Pancreas (tissue), 10 donors: ENCODE measurements at regions of chr3 and their contacts with region 1.

Region 1: DNA sequence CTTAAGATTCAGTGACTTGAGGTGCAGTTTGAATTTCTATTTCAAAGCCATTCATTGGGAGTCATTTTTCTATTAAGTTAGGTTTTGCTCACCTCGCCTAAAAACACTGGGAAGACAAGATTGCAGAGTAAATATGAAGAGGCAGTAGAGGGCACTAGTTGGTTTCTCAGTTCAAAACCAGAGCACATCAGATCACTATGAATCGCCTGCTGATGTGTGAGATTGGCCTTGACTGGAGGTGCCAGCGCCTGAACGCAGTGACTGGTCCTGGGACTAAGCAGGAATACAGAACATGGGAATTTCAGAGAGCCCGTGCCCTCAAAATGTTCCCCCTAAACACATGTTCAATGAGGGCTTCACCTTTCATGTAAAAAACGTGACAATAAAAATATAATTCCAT is 229.0 kb downstream of the ITPR1 start:
- DNase-seq: peak in 4 of 6 donors; percentile 62 to 75 (median 72)
- ATAC-seq: peak; percentile 62 to 80 (median 78)
- H3K4me3 ChIP-seq: no peak overlapping the region
- H3K27ac ChIP-seq: peak overlapping the region in 3 of 4 donors; percentile 44 to 83 (median 69)
- H3K4me1 ChIP-seq: peaks cover 46 to 56% (median 48%) of the 10 kb centered on the region in 3 donors
- H3K27me3 ChIP-seq: no peaks in the 10 kb centered on the region
- CTCF ChIP-seq: peak in 1 of 4 donors; percentile 16

Region 2: GRCh38 chr3:4776980-4777581 is 55.0 kb after region 1 on chr3:
- intact Hi-C with region 1: loop called in 1 of 3 experiments (anchors 10 kb)
- DNase-seq: no peak
- ATAC-seq: peak in 3 of 4 donors; percentile 25 to 45 (median 34)
- H3K4me3 ChIP-seq: no peak overlapping the region
- H3K27ac ChIP-seq: peak overlapping the region in 3 of 4 donors; percentile 40 to 73 (median 68)
- H3K4me1 ChIP-seq: peaks cover 33 to 46% (median 42%) of the 10 kb centered on the region in 3 donors
- H3K27me3 ChIP-seq: no peaks in the 10 kb centered on the region
- CTCF ChIP-seq: no peak

Region 3: DNA sequence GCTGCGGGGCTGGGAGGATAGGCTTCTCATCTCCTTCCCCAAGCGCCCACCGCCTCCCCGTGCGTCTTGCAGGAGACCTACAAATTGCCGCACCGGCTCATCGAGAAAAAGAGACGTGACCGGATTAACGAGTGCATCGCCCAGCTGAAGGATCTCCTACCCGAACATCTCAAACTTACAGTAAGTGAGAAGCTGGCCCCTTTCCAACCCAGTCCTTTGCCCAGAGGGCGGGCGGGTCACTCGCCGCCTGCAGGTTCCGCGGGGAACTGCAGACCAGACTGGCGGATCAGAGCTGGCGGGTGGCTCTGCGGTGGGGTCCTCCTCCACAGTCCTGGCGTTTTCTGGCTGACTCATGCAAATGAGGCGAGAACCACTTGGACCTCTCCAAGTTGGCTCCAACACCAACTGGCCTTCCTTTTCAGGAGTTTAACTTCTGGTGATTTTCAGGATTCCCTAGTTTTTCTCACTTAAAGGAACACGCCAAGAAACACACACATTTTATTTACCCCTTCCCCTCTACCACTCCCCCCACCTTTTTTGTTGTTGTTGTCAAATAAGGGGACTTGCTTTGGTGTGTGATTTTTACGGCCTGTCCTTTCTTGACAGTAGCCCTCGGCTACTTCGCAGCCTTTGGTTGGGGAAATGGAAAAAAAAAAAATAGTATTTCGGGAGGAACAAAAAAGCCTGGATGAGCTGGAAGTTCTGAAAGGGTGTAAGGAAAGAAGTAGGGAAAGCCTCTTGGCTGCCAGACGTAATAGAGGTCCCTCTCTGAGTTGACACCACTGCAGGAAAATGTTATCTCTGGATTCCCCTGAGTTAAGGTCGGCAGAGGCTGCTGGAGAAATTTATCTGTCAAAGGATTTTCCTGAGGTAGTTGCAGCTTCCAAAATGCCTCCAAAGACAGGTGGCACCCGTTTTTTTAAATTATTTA is 258.4 kb after region 1 on chr3:
- intact Hi-C with region 1: loop called in 2 of 3 experiments (anchors 5 to 10 kb)
- DNase-seq: peak; percentile 90 to 97 (median 94)
- ATAC-seq: peak; percentile 18 to 35 (median 30)
- H3K4me3 ChIP-seq: peak overlapping the region; percentile 82 to 97 (median 92)
- H3K27ac ChIP-seq: peak overlapping the region; percentile 99 to 100 (median 100)
- H3K4me1 ChIP-seq: peaks cover 29 to 34% (median 32%) of the 10 kb centered on the region in 3 donors
- H3K27me3 ChIP-seq: no peaks in the 10 kb centered on the region
- CTCF ChIP-seq: peak; percentile 89 to 96 (median 94)